ENCODE measurements at regions of chr6 and their contacts with region 1.

Region 1: DNA sequence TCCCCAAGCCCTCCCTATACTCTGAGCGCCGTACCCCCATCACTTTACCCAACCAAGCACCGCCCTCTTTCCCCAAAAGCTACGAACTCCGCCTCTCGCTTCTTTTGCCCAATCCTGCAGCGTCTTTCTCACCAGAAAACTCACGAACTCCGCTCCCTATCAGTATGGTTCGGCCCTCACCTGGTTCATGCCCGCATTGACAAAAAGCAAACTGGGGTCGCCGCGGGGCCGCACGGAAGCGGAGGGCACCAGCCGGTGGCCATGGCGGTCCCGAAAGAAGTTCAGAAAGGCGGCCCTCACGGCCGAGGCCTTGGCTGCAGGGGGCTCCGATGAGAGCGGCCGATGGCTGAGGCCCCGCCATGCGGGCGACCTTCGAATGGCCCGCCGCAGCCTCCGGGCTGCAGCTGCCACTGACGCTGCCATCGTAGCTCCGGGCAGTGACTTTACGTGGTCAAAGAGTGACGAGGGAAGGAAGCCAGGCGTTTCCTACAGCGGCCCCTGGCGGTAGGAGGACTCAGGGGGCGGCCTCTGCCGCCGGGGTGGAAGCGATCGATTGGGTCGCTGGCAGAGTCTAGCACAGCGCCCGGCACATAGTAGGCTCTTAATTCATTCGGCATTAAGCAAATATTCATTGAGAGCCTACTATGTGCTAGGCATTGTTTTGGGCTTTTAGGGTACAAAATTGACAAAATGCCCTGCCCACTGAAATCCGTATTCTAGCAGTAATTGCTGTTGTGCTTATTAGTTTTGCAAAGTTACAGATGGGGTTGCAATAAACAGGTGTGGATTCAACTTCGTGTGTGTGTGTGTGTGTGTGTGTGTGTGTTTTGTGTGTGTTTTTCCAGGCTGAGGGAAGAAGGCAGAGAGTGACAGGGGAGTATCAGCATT is at the start of gene AARS2:
- DNase-seq: peak; percentile 93
- ATAC-seq: peak; percentile 95
- H3K4me3 Mint-ChIP-seq: peak within 1 kb of the TSS; percentile 95
- H3K27ac Mint-ChIP-seq: peak within 1 kb of the TSS; percentile 93
- H3K4me1 Mint-ChIP-seq: peaks cover 13% of the 10 kb centered on the region
- H3K27me3 Mint-ChIP-seq: peaks cover 7% of the 10 kb centered on the region
- total RNA-seq, gene AARS2: 21.1 to 23.7 TPM

Region 2: GRCh38 chr6:44246663-44247337 is 66.3 kb before region 1 on chr6 and contains the start of gene HSP90AB1:
- CTCF ChIA-PET with region 1: interaction called, 10 read pairs
- DNase-seq: peak; percentile 98
- ATAC-seq: peak; percentile 82
- H3K4me3 Mint-ChIP-seq: peak within 1 kb of the TSS; percentile 99
- H3K27ac Mint-ChIP-seq: peak within 1 kb of the TSS; percentile 99
- H3K4me1 Mint-ChIP-seq: peaks cover 52% of the 10 kb centered on the region
- H3K27me3 Mint-ChIP-seq: no peaks in the 10 kb centered on the region
- total RNA-seq, gene HSP90AB1: 734 to 1,112 TPM

Region 3: GRCh38 chr6:44332585-44332984 is 19.4 kb after region 1 on chr6:
- CTCF ChIA-PET with region 1: interaction called, 12 read pairs
- DNase-seq: no peak
- ATAC-seq: no peak
- H3K4me3 Mint-ChIP-seq: no peak overlapping the region
- H3K27ac Mint-ChIP-seq: no peak overlapping the region
- H3K4me1 Mint-ChIP-seq: no peaks in the 10 kb centered on the region
- H3K27me3 Mint-ChIP-seq: peaks cover 51% of the 10 kb centered on the region

Region 4: GRCh38 chr6:44456070-44456965 is 143.2 kb after region 1 on chr6:
- CTCF ChIA-PET with region 1: no interaction called
- DNase-seq: no peak
- ATAC-seq: peak; percentile 78
- H3K4me3 Mint-ChIP-seq: no peak overlapping the region
- H3K27ac Mint-ChIP-seq: no peak overlapping the region
- H3K4me1 Mint-ChIP-seq: peaks cover 6% of the 10 kb centered on the region
- H3K27me3 Mint-ChIP-seq: peaks cover 9% of the 10 kb centered on the region

Measured in activated CD8-positive, alpha-beta memory T cell treated with anti-CD3 and anti-CD28 coated beads, Interleukin-2, amount 10 ng/mL, durations not matched to agents 7 days and 5 days (primary cell).